PC-3 (cell line): ENCODE measurements at regions of chr1 and their contacts with region 1.

Region 1: GRCh38 chr1:100351095-100351891 is 1.0 kb upstream of the CDC14A start:
- DNase-seq: peak; percentile 90
- ATAC-seq: peak; percentile 71
- H3K4me3 ChIP-seq: peak overlapping the region; percentile 92
- H3K27ac ChIP-seq: peak overlapping the region; percentile 71
- H3K4me1 ChIP-seq: peaks cover 29% of the 10 kb centered on the region
- H3K27me3 ChIP-seq: no peaks in the 10 kb centered on the region
- CTCF ChIP-seq: peak; percentile 55

Region 2: GRCh38 chr1:100132566-100133477 is 218.5 kb before region 1 on chr1 and contains the starts of genes SASS6 and TRMT13:
- CTCF ChIA-PET with region 1: no interaction called
- POLR2A ChIA-PET with region 1: interaction called, 3 read pairs
- intact Hi-C with region 1: loop called (anchors 5 kb)
- DNase-seq: peak; percentile 97
- ATAC-seq: peak; percentile 94
- H3K4me3 ChIP-seq: peak within 1 kb of the TSS; percentile 77
- H3K27ac ChIP-seq: peak within 1 kb of the TSS; percentile 59
- H3K4me1 ChIP-seq: peaks cover 29% of the 10 kb centered on the region
- H3K27me3 ChIP-seq: no peaks in the 10 kb centered on the region
- CTCF ChIP-seq: no peak
- total RNA-seq, gene SASS6: 9.0 and 9.2 TPM in 2 replicates
- total RNA-seq, gene TRMT13: 6.7 and 9.4 TPM in 2 replicates

Region 3: DNA sequence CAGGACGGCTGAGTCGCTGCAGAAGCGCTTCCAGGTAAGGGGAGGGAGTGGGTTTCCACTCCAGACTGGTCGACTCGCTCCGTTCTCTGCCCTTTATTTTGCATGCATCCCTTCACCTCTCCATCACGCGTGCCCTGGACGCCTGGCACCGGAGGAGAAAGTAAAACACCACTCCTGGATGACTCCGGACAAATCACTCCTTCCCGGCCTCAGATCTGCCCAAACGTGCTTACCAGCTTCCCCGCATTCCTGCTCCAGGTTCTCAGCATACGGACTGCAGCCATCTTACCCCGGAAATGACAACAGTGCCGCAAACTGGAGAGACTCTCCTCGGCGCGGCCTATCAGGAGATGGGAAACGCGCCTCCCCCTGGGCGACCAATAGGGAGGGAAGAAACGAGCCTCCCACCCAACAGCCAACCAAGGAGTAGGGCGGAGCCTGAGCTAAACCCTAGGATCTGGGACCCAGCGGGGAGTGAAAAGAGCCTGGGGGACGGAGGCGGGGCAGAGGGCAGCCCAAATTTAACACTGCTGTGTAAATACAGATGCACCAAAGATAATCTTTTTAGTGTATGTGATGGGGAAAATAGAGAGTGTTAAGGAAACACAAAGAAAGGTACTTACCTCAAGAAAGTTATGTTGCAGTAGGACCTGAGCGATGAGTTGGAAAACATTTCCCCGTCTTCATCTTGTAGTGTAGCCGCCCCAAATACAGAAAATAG is 101.6 kb before region 1 on chr1 and contains the start of gene DBT:
- CTCF ChIA-PET with region 1: no interaction called
- POLR2A ChIA-PET with region 1: interaction called, 3 read pairs
- intact Hi-C with region 1: loop called (anchors 2 kb)
- DNase-seq: peak; percentile 94
- ATAC-seq: peak; percentile 99
- H3K4me3 ChIP-seq: peak within 1 kb of the TSS; percentile 77
- H3K27ac ChIP-seq: no peak within 1 kb of the TSS
- H3K4me1 ChIP-seq: peaks cover 12% of the 10 kb centered on the region; the same call in 1 of the 2 replicates
- H3K27me3 ChIP-seq: no peaks in the 10 kb centered on the region
- CTCF ChIP-seq: no peak
- total RNA-seq, gene DBT: 5.1 and 6.1 TPM in 2 replicates

Region 4: DNA sequence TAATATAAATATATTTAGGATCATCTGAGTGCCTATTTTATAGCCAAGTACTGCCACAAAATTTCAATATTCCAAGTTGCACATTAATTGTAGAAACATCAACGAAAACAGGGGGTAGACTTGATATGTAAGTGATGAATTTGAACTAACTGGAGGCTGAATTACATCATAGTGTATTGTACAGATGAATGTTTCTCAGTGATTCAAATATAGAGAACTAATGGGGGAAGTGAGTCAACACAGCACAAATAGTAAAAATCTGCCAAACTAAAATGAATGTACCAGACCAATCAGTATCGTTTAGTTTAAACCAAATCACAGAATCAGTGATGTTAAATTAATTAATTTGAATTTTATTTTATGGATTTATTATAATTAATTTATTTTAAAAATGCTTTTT is 42.5 kb before region 1 on chr1:
- CTCF ChIA-PET with region 1: no interaction called
- POLR2A ChIA-PET with region 1: no interaction called
- intact Hi-C with region 1: loop called (anchors 5 kb)
- DNase-seq: peak; percentile 55
- ATAC-seq: peak; percentile 88
- H3K4me3 ChIP-seq: no peak overlapping the region
- H3K27ac ChIP-seq: no peak overlapping the region
- H3K4me1 ChIP-seq: no peaks in the 10 kb centered on the region; the same call in 1 of the 2 replicates
- H3K27me3 ChIP-seq: no peaks in the 10 kb centered on the region
- CTCF ChIP-seq: no peak

Region 5: GRCh38 chr1:100875228-100875627 is 523.9 kb after region 1 on chr1:
- CTCF ChIA-PET with region 1: no interaction called
- POLR2A ChIA-PET with region 1: no interaction called
- intact Hi-C with region 1: loop called (anchors 10 kb)
- DNase-seq: no peak
- ATAC-seq: no peak
- H3K4me3 ChIP-seq: no peak overlapping the region
- H3K27ac ChIP-seq: no peak overlapping the region
- H3K4me1 ChIP-seq: no peaks in the 10 kb centered on the region
- H3K27me3 ChIP-seq: no peaks in the 10 kb centered on the region
- CTCF ChIP-seq: no peak